ENCODE measurements at regions of chr1 and their contacts with region 1.

Region 1: GRCh38 chr1:176159993-176160392 is 47.1 kb downstream of the COP1 start:
- DNase-seq: no peak
- ATAC-seq: peak; percentile 70
- H3K4me3 Mint-ChIP-seq: peak overlapping the region; percentile 29
- H3K27ac Mint-ChIP-seq: peak overlapping the region; percentile 79
- H3K4me1 Mint-ChIP-seq: peaks cover 46% of the 10 kb centered on the region
- H3K27me3 Mint-ChIP-seq: no peaks in the 10 kb centered on the region

Region 2: DNA sequence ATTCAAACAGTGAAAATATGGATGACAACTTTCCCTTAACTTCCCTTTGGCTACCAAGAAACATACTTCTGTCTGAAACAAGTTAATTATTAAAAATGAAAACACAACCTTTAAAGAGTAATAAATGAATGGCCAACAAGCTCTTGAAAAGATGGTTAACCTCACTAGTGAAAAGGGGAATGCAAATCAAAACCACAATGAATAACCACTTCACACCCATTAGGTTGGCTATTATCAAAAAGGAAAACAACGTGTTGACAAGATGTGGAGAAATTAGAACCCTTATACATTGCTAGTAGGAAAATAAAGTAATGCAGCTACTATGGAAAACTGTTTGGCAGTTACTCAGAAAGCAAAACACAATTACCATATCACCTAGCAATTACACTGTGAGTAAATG is 33.0 kb after region 1 on chr1:
- CTCF ChIA-PET with region 1: no interaction called
- POLR2A ChIA-PET with region 1: no interaction called
- intact Hi-C with region 1: loop called in 1 of 2 experiments (anchors 1 kb)
- DNase-seq: no peak
- ATAC-seq: peak; percentile 61
- H3K4me3 Mint-ChIP-seq: no peak overlapping the region
- H3K27ac Mint-ChIP-seq: no peak overlapping the region
- H3K4me1 Mint-ChIP-seq: peaks cover 79% of the 10 kb centered on the region
- H3K27me3 Mint-ChIP-seq: no peaks in the 10 kb centered on the region

Measured in activated CD4-positive, alpha-beta T cell treated with anti-CD3 and anti-CD28 coated beads for 36 hours (primary cell).